Cardiac septum (tissue), 1 donor: ENCODE measurements at regions of chr19 and their contacts with region 1.

Region 1: GRCh38 chr19:55563261-55563690 is 17.4 kb downstream of the ZNF579 start:
- DNase-seq: peak; percentile 88

Region 2: GRCh38 chr19:55526216-55527196 is 36.8 kb before region 1 on chr19:
- intact Hi-C with region 1: loop called (anchors 5 kb)
- DNase-seq: no peak

Region 3: DNA sequence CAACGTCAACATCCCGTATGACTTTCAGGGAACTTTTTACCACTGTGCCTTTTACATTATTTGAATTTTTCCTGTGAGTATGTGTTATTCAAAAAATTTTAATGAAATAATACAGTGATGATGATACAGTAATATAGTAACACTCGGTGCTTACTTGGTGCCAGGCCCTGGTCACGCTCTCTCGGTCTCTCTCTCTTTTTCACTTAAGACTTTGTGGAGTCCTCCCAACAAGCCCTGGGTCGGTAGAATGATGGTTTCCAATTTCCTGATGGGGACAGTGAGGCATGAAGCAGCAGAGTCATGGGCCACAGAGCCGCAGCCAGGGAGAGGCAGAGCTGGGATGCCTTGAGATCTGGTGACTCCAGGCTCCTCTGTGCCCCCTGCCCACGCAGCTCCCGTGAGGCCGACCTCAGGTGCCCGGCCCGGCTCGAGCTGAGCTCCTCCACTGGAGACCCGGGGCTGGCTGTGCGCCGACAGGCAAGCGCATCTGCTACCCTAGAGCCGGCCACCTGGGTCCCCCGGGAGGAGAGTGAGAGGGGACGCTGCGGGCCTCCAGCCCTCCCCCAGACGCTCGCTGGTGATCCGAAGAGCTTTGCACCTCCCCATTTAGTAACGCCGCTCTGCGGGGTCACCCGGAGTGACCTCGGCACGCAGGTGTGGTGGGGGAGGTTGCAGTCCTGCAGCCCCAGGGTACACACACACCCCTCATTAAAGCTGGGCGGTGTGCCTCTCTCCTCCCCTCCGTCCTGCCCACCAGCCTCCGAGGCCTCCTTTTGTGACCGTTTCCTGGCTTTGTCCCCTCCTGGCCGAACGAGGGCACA is 13.6 kb before region 1 on chr19:
- intact Hi-C with region 1: loop called (anchors 1 kb)
- DNase-seq: no peak